Endothelial cell of umbilical vein (primary cell): ENCODE measurements at regions of chr5 and their contacts with region 1.

Region 1: GRCh38 chr5:98773464-98774191 is at the start of gene RGMB:
- DNase-seq: peak; percentile 99
- H3K4me3 ChIP-seq: peak within 1 kb of the TSS; percentile 84 to 98 (median 87)
- H3K27ac ChIP-seq: peak within 1 kb of the TSS; percentile 76
- H3K4me1 ChIP-seq: peaks cover 35% of the 10 kb centered on the region
- H3K27me3 ChIP-seq: no peaks in the 10 kb centered on the region
- CTCF ChIP-seq: no peak
- POLR2A ChIP-seq: peak; percentile 92
- total RNA-seq, gene RGMB: 27.5 and 31.3 TPM in 2 replicates

Region 2: GRCh38 chr5:97183100-97183929 is 1590.3 kb before region 1 on chr5 and contains the start of gene RIOK2:
- CTCF ChIA-PET with region 1: interaction called, 5 read pairs
- POLR2A ChIA-PET with region 1: no interaction called
- dilution Hi-C with region 1: no loop called
- intact Hi-C with region 1: loop called (anchors 1 kb)
- DNase-seq: peak; percentile 99
- H3K4me3 ChIP-seq: peak within 1 kb of the TSS; percentile 83 to 97 (median 91)
- H3K27ac ChIP-seq: peak within 1 kb of the TSS; percentile 85
- H3K4me1 ChIP-seq: peaks cover 15% of the 10 kb centered on the region
- H3K27me3 ChIP-seq: no peaks in the 10 kb centered on the region
- CTCF ChIP-seq: no peak
- POLR2A ChIP-seq: peak; percentile 81
- total RNA-seq, gene RIOK2: 17.5 and 25.4 TPM in 2 replicates

Region 3: DNA sequence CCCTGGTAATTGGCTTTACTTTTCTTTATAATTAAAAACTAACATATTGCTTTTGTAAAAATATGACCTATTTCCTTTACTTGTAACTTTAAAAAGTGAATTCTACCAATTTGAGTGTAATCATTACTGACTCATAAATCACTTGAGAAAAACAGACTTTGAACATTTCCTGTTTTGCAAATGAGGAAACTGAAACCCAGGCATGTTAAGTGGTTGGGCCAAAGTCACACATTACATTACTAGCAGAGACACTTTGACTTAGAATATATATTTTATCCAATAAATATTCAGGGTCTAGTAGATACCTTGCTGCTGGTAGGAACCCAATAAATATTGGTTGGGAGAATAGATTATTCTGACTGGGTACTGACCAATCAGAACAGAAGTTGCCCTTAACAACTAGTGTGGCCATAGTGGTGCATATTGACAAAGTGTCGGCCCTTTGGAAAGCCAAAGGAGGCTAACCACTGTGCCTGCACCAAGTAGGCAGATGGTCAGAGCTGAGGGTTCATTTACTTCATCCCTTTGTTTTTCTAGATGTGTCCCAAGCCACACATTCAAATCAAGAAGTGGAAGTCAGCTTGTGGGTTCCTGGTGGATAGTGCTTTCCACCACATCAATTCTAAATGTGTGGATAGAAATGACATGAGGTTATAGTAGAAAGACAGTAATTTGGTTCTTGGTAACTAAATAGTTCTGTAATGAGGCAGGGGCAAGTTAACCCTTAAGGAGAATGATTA is 1225.5 kb before region 1 on chr5:
- CTCF ChIA-PET with region 1: no interaction called
- POLR2A ChIA-PET with region 1: no interaction called
- dilution Hi-C with region 1: no loop called
- intact Hi-C with region 1: loop called (anchors 5 kb)
- DNase-seq: peak; percentile 84
- H3K4me3 ChIP-seq: no peak overlapping the region
- H3K27ac ChIP-seq: no peak overlapping the region
- H3K4me1 ChIP-seq: peaks cover 23% of the 10 kb centered on the region
- H3K27me3 ChIP-seq: no peaks in the 10 kb centered on the region
- CTCF ChIP-seq: no peak
- POLR2A ChIP-seq: no peak

Region 4: GRCh38 chr5:98109561-98110006 is 664.0 kb before region 1 on chr5:
- CTCF ChIA-PET with region 1: interaction called, 13 read pairs
- POLR2A ChIA-PET with region 1: no interaction called
- dilution Hi-C with region 1: no loop called
- intact Hi-C with region 1: loop called (anchors 5 kb)
- DNase-seq: peak; percentile 47
- H3K4me3 ChIP-seq: no peak overlapping the region
- H3K27ac ChIP-seq: peak overlapping the region; percentile 97
- H3K4me1 ChIP-seq: peaks cover 40% of the 10 kb centered on the region
- H3K27me3 ChIP-seq: no peaks in the 10 kb centered on the region
- CTCF ChIP-seq: no peak
- POLR2A ChIP-seq: no peak

Region 5: GRCh38 chr5:98454904-98455303 is 318.7 kb before region 1 on chr5:
- CTCF ChIA-PET with region 1: interaction called, 49 read pairs
- POLR2A ChIA-PET with region 1: no interaction called
- dilution Hi-C with region 1: no loop called
- intact Hi-C with region 1: loop called (anchors 1 kb)
- DNase-seq: peak; percentile 80
- H3K4me3 ChIP-seq: peak overlapping the region in 1 of 3 experiments; percentile 53
- H3K27ac ChIP-seq: peak overlapping the region; percentile 72
- H3K4me1 ChIP-seq: peaks cover 19% of the 10 kb centered on the region
- H3K27me3 ChIP-seq: no peaks in the 10 kb centered on the region
- CTCF ChIP-seq: peak in 1 of 2 donors; percentile 4
- POLR2A ChIP-seq: no peak

Region 6: GRCh38 chr5:98700730-98701129 is 72.9 kb before region 1 on chr5:
- CTCF ChIA-PET with region 1: no interaction called
- POLR2A ChIA-PET with region 1: no interaction called
- dilution Hi-C with region 1: no loop called
- intact Hi-C with region 1: no loop called
- DNase-seq: no peak
- H3K4me3 ChIP-seq: no peak overlapping the region
- H3K27ac ChIP-seq: no peak overlapping the region
- H3K4me1 ChIP-seq: no peaks in the 10 kb centered on the region
- H3K27me3 ChIP-seq: no peaks in the 10 kb centered on the region
- CTCF ChIP-seq: no peak
- POLR2A ChIP-seq: no peak

Region 7: GRCh38 chr5:99032234-99033013 is 258.8 kb after region 1 on chr5:
- CTCF ChIA-PET with region 1: no interaction called
- POLR2A ChIA-PET with region 1: no interaction called
- dilution Hi-C with region 1: no loop called
- intact Hi-C with region 1: loop called (anchors 1 kb)
- DNase-seq: peak; percentile 86
- H3K4me3 ChIP-seq: peak overlapping the region in 1 of 3 experiments; percentile 2
- H3K27ac ChIP-seq: peak overlapping the region; percentile 46
- H3K4me1 ChIP-seq: peaks cover 16% of the 10 kb centered on the region
- H3K27me3 ChIP-seq: no peaks in the 10 kb centered on the region
- CTCF ChIP-seq: peak; percentile 62 to 80
- POLR2A ChIP-seq: no peak